Activated B cell treated with CpG ODN at 0.5 μM for 24 hours (primary cell): ENCODE measurements at regions of chr12 and their contacts with region 1.

Region 1: GRCh38 chr12:112214064-112214463 is 88.7 kb downstream of the TRAFD1 start:
- DNase-seq: no peak
- ATAC-seq: no peak
- H3K4me3 Mint-ChIP-seq: no peak overlapping the region
- H3K27ac Mint-ChIP-seq: peak overlapping the region; percentile 60
- H3K4me1 Mint-ChIP-seq: peaks cover 40% of the 10 kb centered on the region
- H3K27me3 Mint-ChIP-seq: no peaks in the 10 kb centered on the region
- CTCF ChIP-seq: no peak

Region 2: GRCh38 chr12:110760204-110760609 is 1453.9 kb before region 1 on chr12:
- CTCF ChIA-PET with region 1: no interaction called
- POLR2A ChIA-PET with region 1: interaction called, 10 read pairs
- intact Hi-C with region 1: no loop called
- DNase-seq: no peak
- ATAC-seq: no peak
- H3K4me3 Mint-ChIP-seq: no peak overlapping the region
- H3K27ac Mint-ChIP-seq: peak overlapping the region; percentile 8
- H3K4me1 Mint-ChIP-seq: no peaks in the 10 kb centered on the region
- H3K27me3 Mint-ChIP-seq: no peaks in the 10 kb centered on the region
- CTCF ChIP-seq: no peak